ENCODE measurements at regions of chr6 and their contacts with region 1.

Region 1: DNA sequence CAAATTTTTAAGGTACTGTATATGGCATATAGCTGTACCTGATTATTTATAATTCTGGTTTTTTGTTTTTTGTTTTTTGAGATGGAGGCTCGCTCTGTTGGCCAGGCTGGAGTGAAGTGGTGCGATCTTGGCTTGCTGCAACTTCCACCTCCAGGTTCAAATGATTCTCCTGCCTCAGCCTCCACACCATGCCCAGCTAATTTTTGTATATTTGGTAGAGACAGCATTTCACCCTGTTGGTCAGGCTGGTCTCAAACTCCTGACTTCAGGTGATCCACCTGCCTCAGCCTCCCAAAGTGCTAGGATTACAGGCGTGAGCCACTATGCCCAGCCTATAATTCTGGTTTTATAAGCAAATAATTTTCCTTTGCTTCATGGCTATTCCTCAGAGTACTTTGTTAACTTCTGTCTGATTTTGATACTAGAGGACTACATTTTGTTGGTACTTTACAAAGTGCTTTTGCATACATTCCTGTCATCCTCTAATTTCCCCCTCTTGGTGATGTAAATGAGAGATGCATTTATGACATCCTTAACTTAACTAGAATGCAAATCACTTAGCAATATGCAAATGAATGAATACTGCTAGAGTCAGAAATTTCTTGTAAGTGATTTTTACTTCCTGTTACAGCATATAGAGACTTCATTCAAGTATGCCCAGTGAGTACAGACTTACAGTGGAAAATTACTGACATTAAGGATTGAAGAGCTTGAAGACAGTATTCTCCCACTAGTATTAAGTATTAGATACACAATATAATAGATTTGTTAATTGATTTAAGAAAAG is 35.7 kb upstream of the ARID1B start:
- DNase-seq: no peak
- H3K4me3 ChIP-seq: no peak overlapping the region
- H3K27me3 ChIP-seq: no peaks in the 10 kb centered on the region
- CTCF ChIP-seq: no peak

Region 2: GRCh38 chr6:156310701-156311100 is 430.8 kb before region 1 on chr6:
- CTCF ChIA-PET with region 1: no interaction called
- POLR2A ChIA-PET with region 1: no interaction called
- DNase-seq: no peak
- H3K4me3 ChIP-seq: no peak overlapping the region
- H3K27me3 ChIP-seq: no peaks in the 10 kb centered on the region
- CTCF ChIP-seq: no peak

Region 3: DNA sequence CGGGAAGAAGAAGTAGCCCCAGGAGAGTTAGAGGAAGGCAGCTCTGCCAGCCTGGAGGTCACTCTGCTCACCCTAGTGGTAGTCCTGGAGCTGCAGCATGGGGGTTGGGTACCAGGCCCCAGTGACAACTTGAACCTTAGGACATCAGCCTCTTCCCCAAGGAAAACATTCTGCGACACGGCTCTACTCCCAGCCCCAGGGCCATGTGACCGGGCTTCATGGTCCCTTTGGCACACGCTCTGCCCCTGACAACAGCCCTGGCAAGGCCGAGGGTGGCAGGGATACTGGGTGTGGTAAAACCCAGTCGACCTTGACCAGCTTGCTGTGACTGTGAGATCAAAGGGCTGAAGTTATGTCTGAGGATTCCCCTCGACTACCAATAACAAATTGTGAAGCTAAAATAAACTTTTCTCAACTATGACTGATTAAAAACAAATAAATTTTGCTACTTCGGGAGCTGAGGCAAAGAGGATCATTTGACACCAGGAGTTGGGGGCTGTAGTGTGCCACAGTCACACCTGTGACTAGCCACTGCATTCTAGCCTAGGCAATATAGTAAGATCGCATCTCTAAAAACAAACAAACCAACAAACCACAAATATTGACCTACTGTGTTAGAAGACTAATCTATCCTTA is 11.3 kb after region 1 on chr6:
- CTCF ChIA-PET with region 1: interaction called, 10 read pairs
- POLR2A ChIA-PET with region 1: no interaction called
- DNase-seq: no peak
- H3K4me3 ChIP-seq: no peak overlapping the region
- H3K27me3 ChIP-seq: no peaks in the 10 kb centered on the region; the same call in 1 of the 2 replicates
- CTCF ChIP-seq: no peak